Common myeloid progenitor, CD34-positive (primary cell): ENCODE measurements at regions of chr10 and their contacts with region 1.

Region 1: GRCh38 chr10:24929056-24929544 is 23.3 kb downstream of the PRTFDC1 start:
- DNase-seq: peak in 2 of 3 donors; percentile 55 to 62
- H3K4me3 ChIP-seq: no peak overlapping the region
- H3K27ac ChIP-seq: no peak overlapping the region
- H3K4me1 ChIP-seq: peaks cover 0 to 17% (median 5%) of the 10 kb centered on the region in 4 experiments
- H3K27me3 ChIP-seq: no peaks in the 10 kb centered on the region

Region 2: GRCh38 chr10:24884793-24885192 is 44.3 kb before region 1 on chr10:
- CTCF ChIA-PET with region 1: interaction called, 10 read pairs
- POLR2A ChIA-PET with region 1: no interaction called
- DNase-seq: no peak
- H3K4me3 ChIP-seq: no peak overlapping the region
- H3K27ac ChIP-seq: no peak overlapping the region
- H3K4me1 ChIP-seq: peaks cover 3 to 22% (median 17%) of the 10 kb centered on the region in 4 experiments
- H3K27me3 ChIP-seq: no peaks in the 10 kb centered on the region

Region 3: GRCh38 chr10:24915304-24915703 is 13.8 kb before region 1 on chr10:
- CTCF ChIA-PET with region 1: interaction called, 12 read pairs
- POLR2A ChIA-PET with region 1: no interaction called
- DNase-seq: no peak
- H3K4me3 ChIP-seq: no peak overlapping the region
- H3K27ac ChIP-seq: no peak overlapping the region
- H3K4me1 ChIP-seq: peaks cover 0 to 20% (median 11%) of the 10 kb centered on the region in 4 experiments
- H3K27me3 ChIP-seq: no peaks in the 10 kb centered on the region